Posterior vena cava (tissue), 2 donors: ENCODE measurements at regions of chr13 and their contacts with region 1.

Region 1: GRCh38 chr13:34926508-34926907 is 15.6 kb upstream of the NBEA start:
- DNase-seq: no peak

Region 2: DNA sequence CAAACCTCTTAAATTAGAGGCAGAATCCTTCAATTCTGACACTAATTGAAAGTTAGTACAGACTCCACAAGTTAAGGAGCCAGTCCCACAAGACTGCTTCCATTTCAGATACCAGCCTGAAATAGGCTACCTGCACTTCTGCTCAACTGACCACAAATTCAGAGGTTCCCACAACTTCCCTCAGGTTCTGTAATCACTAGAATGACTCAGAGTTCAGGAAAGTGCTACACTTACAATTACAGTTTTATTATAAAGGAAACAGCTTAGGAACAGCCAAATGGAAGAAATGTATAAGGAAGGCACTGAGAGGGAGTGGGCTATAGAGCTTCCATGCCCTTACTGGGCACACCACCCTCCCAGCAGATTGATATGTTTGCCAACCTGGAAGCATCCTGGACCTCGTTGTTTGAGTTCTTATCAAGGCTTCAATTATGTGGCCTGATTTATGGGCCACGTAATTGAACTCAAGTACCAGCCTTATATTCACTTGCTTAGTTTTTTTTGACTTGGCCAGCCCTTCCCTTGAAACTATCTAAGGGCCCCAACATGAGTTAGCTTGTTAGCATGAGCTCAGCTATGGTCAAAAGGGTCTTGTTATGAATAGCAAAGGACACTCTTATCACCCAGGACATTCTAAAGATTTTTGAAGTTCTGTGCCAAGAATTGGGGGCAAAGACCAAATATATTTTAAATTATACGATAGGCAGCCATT is 41.5 kb after region 1 on chr13:
- intact Hi-C with region 1: loop called in 1 of 2 experiments (anchors 2 kb)
- DNase-seq: no peak